ENCODE measurements at regions of chr6 and their contacts with region 1.

Region 1: GRCh38 chr6:116111552-116112528 is 11.2 kb downstream of the NT5DC1 start:
- DNase-seq: no peak
- ATAC-seq: peak; percentile 90
- H3K4me3 ChIP-seq: no peak overlapping the region
- H3K27ac ChIP-seq: no peak overlapping the region
- H3K4me1 ChIP-seq: peaks cover 2% of the 10 kb centered on the region; the same call in 1 of the 2 replicates
- H3K27me3 ChIP-seq: no peaks in the 10 kb centered on the region
- CTCF ChIP-seq: peak; percentile 59 to 78 (median 74)
- EP300 ChIP-seq: no peak
- POLR2A ChIP-seq: no peak
- RAD21 ChIP-seq: peak; percentile 65

Region 2: GRCh38 chr6:116060572-116061283 is 51.1 kb before region 1 on chr6 and contains the start of gene FRK:
- CTCF ChIA-PET with region 1: interaction called, 10 read pairs
- POLR2A ChIA-PET with region 1: interaction called, 5 read pairs
- RAD21 ChIA-PET with region 1: interaction called, 3 read pairs
- SMC1A ChIA-PET with region 1: interaction called, 7 read pairs
- in situ Hi-C with region 1: no loop called
- intact Hi-C with region 1: no loop called
- DNase-seq: no peak
- ATAC-seq: peak; percentile 60
- H3K4me3 ChIP-seq: no peak within 1 kb of the TSS
- H3K27ac ChIP-seq: no peak within 1 kb of the TSS
- H3K4me1 ChIP-seq: peaks cover 11% of the 10 kb centered on the region
- H3K27me3 ChIP-seq: no peaks in the 10 kb centered on the region
- CTCF ChIP-seq: no peak
- EP300 ChIP-seq: no peak
- POLR2A ChIP-seq: no peak
- RAD21 ChIP-seq: no peak
- polyA plus RNA-seq, gene FRK: 0.29 to 0.32 TPM

Region 3: GRCh38 chr6:116087437-116088027 is 24.3 kb before region 1 on chr6:
- CTCF ChIA-PET with region 1: interaction called, 14 read pairs
- POLR2A ChIA-PET with region 1: interaction called, 3 read pairs
- RAD21 ChIA-PET with region 1: interaction called, 5 read pairs
- SMC1A ChIA-PET with region 1: interaction called, 5 read pairs
- in situ Hi-C with region 1: no loop called
- intact Hi-C with region 1: no loop called
- DNase-seq: peak; percentile 92
- ATAC-seq: peak; percentile 92
- H3K4me3 ChIP-seq: peak overlapping the region; percentile 15; the same call in 1 of the 2 replicates
- H3K27ac ChIP-seq: peak overlapping the region; percentile 98
- H3K4me1 ChIP-seq: peaks cover 57% of the 10 kb centered on the region
- H3K27me3 ChIP-seq: no peaks in the 10 kb centered on the region
- CTCF ChIP-seq: no peak
- EP300 ChIP-seq: peak; percentile 45 to 80; a peak in 1 of 4 replicates
- POLR2A ChIP-seq: 0 out of 2 replicates have a peak, but pooled peaks have one; percentile 18
- RAD21 ChIP-seq: 0 out of 2 replicates have a peak, but pooled peaks have one; percentile 4

Region 4: GRCh38 chr6:116158641-116159040 is 46.8 kb after region 1 on chr6:
- CTCF ChIA-PET with region 1: interaction called, 10 read pairs
- POLR2A ChIA-PET with region 1: no interaction called
- RAD21 ChIA-PET with region 1: no interaction called
- SMC1A ChIA-PET with region 1: no interaction called
- in situ Hi-C with region 1: no loop called
- intact Hi-C with region 1: no loop called
- DNase-seq: no peak
- ATAC-seq: no peak
- H3K4me3 ChIP-seq: no peak overlapping the region
- H3K27ac ChIP-seq: no peak overlapping the region
- H3K4me1 ChIP-seq: no peaks in the 10 kb centered on the region
- H3K27me3 ChIP-seq: no peaks in the 10 kb centered on the region
- CTCF ChIP-seq: no peak
- EP300 ChIP-seq: no peak
- POLR2A ChIP-seq: no peak
- RAD21 ChIP-seq: no peak

Region 5: GRCh38 chr6:116328528-116328903 is 216.7 kb after region 1 on chr6:
- CTCF ChIA-PET with region 1: no interaction called
- POLR2A ChIA-PET with region 1: no interaction called
- RAD21 ChIA-PET with region 1: no interaction called
- SMC1A ChIA-PET with region 1: no interaction called
- in situ Hi-C with region 1: no loop called
- intact Hi-C with region 1: no loop called
- DNase-seq: no peak
- ATAC-seq: no peak
- H3K4me3 ChIP-seq: no peak overlapping the region
- H3K27ac ChIP-seq: no peak overlapping the region
- H3K4me1 ChIP-seq: no peaks in the 10 kb centered on the region
- H3K27me3 ChIP-seq: no peaks in the 10 kb centered on the region
- CTCF ChIP-seq: no peak
- EP300 ChIP-seq: no peak
- POLR2A ChIP-seq: no peak
- RAD21 ChIP-seq: no peak

Measured in GM12878 (cell line).